MCF 10A (cell line): ENCODE measurements at regions of chr7 and their contacts with region 1.

Region 1: DNA sequence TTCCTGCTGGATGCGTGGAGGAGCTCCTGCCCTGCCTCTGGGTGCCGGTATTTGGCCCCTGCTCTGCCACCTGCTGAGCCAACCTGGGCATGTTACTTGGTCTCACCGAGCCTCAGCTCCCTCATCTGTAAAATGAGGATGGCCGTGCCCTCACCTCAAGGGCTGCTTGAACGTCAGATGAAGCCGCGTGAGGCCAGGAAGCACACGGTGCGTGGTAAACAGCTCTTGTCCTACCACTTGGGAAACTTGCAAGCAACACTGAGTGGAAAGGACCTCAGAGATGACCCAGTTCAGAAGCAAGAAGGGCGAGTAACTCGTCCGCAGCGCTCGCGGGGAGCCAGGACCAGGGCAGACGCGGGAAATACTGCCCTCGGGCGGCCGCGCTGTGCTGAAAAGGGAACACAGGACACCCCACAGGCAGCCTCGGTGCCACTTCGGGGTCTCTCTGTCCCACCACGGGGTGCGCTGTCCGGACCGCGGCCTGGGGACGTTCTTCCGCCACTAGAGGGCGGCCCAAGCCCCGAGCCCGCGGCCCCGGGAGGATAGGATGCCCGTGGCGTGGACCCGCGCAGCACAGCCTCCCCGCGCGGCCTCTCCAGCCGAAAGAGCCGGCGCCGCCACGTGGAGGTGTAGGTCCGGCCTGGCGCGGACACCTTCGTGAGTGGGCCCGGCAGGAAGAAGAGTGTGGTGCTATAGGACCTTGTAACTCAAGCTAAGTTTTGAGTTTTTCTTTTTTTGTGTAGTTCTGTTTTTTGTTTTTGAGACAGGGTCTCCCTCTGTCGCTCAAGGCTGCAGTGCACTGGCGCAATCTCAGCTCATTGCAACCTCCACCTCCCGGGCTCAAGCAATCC is 94.1 kb downstream of the PRKAG2 start:
- DNase-seq: peak; percentile 52
- H3K4me3 Mint-ChIP-seq: peak overlapping the region; percentile 27
- H3K27ac Mint-ChIP-seq: no peak overlapping the region
- H3K4me1 Mint-ChIP-seq: no peaks in the 10 kb centered on the region
- H3K27me3 Mint-ChIP-seq: peaks cover 14% of the 10 kb centered on the region
- CTCF ChIP-seq: peak; percentile 84

Region 2: GRCh38 chr7:151752816-151753595 is 29.8 kb before region 1 on chr7:
- CTCF ChIA-PET with region 1: no interaction called
- POLR2A ChIA-PET with region 1: no interaction called
- intact Hi-C with region 1: no loop called
- DNase-seq: no peak
- H3K4me3 Mint-ChIP-seq: no peak overlapping the region
- H3K27ac Mint-ChIP-seq: no peak overlapping the region
- H3K4me1 Mint-ChIP-seq: peaks cover 18% of the 10 kb centered on the region
- H3K27me3 Mint-ChIP-seq: no peaks in the 10 kb centered on the region
- CTCF ChIP-seq: no peak

Region 3: GRCh38 chr7:151795168-151795811 is 12.5 kb after region 1 on chr7:
- CTCF ChIA-PET with region 1: interaction called, 92 read pairs
- POLR2A ChIA-PET with region 1: interaction called, 6 read pairs
- intact Hi-C with region 1: no loop called
- DNase-seq: peak; percentile 29
- H3K4me3 Mint-ChIP-seq: no peak overlapping the region
- H3K27ac Mint-ChIP-seq: peak overlapping the region; percentile 51
- H3K4me1 Mint-ChIP-seq: peaks cover 25% of the 10 kb centered on the region
- H3K27me3 Mint-ChIP-seq: no peaks in the 10 kb centered on the region
- CTCF ChIP-seq: no peak

Region 4: DNA sequence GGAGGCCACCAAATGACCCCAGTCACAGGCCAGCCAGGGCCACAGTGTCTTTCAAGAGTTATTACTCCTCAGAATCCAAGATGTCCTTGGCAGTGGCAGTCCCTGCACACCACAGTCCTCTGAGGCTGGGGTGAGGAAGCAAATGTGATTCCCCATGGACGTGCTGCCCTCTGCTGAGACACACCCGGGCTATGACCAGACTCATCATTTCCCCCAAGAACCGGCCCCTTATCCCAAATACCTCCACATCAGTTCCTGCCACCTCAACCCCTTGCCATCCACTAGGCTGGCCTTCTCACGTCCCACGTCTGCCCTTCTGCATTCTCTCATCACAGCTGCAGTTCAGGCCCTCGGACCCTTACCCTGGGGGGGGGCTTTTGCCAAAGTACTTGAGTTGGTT is 89.1 kb after region 1 on chr7:
- CTCF ChIA-PET with region 1: interaction called, 17 read pairs
- POLR2A ChIA-PET with region 1: no interaction called
- intact Hi-C with region 1: loop called (anchors 2 kb)
- DNase-seq: no peak
- H3K4me3 Mint-ChIP-seq: no peak overlapping the region
- H3K27ac Mint-ChIP-seq: no peak overlapping the region
- H3K4me1 Mint-ChIP-seq: no peaks in the 10 kb centered on the region
- H3K27me3 Mint-ChIP-seq: no peaks in the 10 kb centered on the region
- CTCF ChIP-seq: peak; percentile 22

Region 5: GRCh38 chr7:151925446-151926335 is 142.9 kb after region 1 on chr7:
- CTCF ChIA-PET with region 1: interaction called, 10 read pairs
- POLR2A ChIA-PET with region 1: no interaction called
- intact Hi-C with region 1: no loop called
- DNase-seq: no peak
- H3K4me3 Mint-ChIP-seq: no peak overlapping the region
- H3K27ac Mint-ChIP-seq: no peak overlapping the region
- H3K4me1 Mint-ChIP-seq: peaks cover 26% of the 10 kb centered on the region
- H3K27me3 Mint-ChIP-seq: no peaks in the 10 kb centered on the region
- CTCF ChIP-seq: no peak

Region 6: DNA sequence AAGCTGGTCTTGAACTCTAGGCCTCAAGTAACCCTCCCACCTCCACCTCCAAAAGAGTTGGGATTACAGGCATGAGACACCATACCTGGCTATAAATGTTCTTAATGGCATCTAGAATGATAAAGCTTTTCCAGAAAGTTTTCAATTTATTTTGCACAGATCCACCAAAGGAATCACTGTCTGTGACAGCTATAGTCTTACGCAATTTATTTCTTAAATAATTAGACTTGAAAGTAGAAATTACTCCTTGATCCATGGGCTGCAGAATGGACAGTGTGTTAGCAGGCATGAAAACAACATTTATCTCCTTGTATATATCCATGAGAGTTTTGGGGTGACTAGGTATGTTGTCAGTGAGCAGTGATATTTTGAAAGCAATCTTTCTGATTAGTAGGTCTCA is 276.5 kb after region 1 on chr7:
- CTCF ChIA-PET with region 1: no interaction called
- POLR2A ChIA-PET with region 1: no interaction called
- intact Hi-C with region 1: no loop called
- DNase-seq: no peak
- H3K4me3 Mint-ChIP-seq: no peak overlapping the region
- H3K27ac Mint-ChIP-seq: no peak overlapping the region
- H3K4me1 Mint-ChIP-seq: peaks cover 5% of the 10 kb centered on the region
- H3K27me3 Mint-ChIP-seq: no peaks in the 10 kb centered on the region
- CTCF ChIP-seq: no peak

Region 7: DNA sequence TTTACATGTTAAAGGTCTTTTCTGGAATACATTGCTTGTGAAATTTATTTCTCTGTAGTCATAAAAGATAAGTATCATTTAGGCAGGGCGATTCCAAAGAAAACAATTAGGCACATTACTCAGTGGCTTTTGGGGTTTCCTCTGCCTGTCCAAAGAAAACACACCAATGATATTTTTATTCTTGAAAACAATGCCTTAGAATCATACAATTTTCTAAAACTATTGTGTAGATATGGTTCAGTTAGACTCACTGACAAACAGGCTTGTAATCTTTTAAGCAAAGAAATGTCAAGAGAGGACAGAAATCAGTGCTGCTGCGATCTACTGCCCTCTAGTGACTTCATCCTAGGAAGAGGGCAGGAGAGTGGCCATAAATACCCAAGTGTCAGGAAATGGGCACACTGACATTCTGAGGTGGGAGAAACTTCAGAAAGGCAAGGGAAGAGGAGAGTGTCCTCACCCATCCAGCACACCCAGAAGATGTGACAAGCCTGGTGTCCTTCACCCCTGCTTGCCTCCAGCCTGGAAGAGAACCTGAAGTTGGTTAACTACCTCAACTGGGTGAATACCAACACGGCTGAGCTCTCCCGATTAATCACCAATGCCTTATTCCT is 363.1 kb after region 1 on chr7:
- CTCF ChIA-PET with region 1: interaction called, 6 read pairs
- POLR2A ChIA-PET with region 1: no interaction called
- intact Hi-C with region 1: loop called (anchors 2 kb)
- DNase-seq: peak; percentile 64
- H3K4me3 Mint-ChIP-seq: no peak overlapping the region
- H3K27ac Mint-ChIP-seq: peak overlapping the region; percentile 39
- H3K4me1 Mint-ChIP-seq: peaks cover 5% of the 10 kb centered on the region
- H3K27me3 Mint-ChIP-seq: no peaks in the 10 kb centered on the region
- CTCF ChIP-seq: peak; percentile 67